ENCODE measurements at regions of chr7 and their contacts with region 1.

Region 1: DNA sequence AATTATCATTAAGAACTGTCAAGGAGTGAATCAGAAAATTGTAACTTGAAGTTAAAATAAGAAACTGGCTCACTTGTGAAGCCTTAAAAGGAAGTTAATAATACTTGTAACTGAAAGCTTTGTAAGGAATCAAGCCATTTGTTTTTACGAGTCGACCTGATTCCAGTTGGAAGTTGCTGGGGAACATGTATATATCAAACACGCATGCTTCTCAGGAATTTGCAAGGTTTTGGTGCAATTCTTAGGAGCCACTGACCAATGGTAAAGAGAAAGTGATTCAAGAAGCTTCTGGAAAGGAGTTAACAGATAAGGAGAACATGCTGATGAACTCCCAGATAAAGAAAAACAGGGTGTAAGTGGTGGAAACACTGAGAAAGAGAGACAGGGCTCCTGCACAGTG is 56.4 kb downstream of the ETV1 start:
- DNase-seq: no peak

Region 2: GRCh38 chr7:14184292-14184864 is 251.3 kb after region 1 on chr7:
- intact Hi-C with region 1: loop called in 1 of 2 experiments (anchors 10 kb)
- DNase-seq: no peak